ENCODE measurements at regions of chr3 and their contacts with region 1.

Region 1: GRCh38 chr3:14508961-14509795 is 31.0 kb downstream of the GRIP2 start:
- DNase-seq: peak; percentile 69
- H3K4me3 ChIP-seq: no peak overlapping the region
- H3K27ac ChIP-seq: no peak overlapping the region
- H3K4me1 ChIP-seq: no peaks in the 10 kb centered on the region
- CTCF ChIP-seq: peak; percentile 84

Region 2: DNA sequence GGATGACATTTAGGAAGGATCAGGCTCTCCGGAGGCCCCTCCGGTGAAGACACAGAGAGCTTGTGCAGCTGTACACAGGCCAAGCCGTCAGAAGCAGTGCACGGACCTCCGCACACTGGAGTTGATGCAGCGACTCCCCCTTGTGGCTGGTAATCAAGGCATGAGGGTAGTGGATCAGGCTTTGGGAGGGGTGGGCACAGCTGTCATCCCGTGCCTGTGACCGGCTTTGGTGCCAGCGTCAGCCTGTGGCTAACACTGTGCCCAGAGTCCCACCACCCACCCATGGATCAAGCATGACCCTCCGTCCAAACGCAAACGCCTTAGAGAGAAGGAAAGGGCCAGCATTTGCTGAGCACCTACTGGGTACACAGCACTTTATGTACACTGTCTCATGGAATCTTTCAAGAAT is 39.1 kb after region 1 on chr3:
- CTCF ChIA-PET with region 1: interaction called, 20 read pairs
- POLR2A ChIA-PET with region 1: no interaction called
- intact Hi-C with region 1: loop called (anchors 1 kb)
- DNase-seq: peak; percentile 61
- H3K4me3 ChIP-seq: no peak overlapping the region
- H3K27ac ChIP-seq: no peak overlapping the region
- H3K4me1 ChIP-seq: no peaks in the 10 kb centered on the region
- CTCF ChIP-seq: peak; percentile 80